Dorsolateral prefrontal cortex (tissue), 120 donors: ENCODE measurements at regions of chr1 and their contacts with region 1.

Region 1: GRCh38 chr1:201625226-201625761 is 86.4 kb downstream of the NAV1 start:
- DNase-seq: no peak
- H3K4me3 ChIP-seq: no peak overlapping the region
- H3K27ac ChIP-seq: no peak overlapping the region
- H3K27me3 ChIP-seq: no peaks in the 10 kb centered on the region
- CTCF ChIP-seq: no peak

Region 2: DNA sequence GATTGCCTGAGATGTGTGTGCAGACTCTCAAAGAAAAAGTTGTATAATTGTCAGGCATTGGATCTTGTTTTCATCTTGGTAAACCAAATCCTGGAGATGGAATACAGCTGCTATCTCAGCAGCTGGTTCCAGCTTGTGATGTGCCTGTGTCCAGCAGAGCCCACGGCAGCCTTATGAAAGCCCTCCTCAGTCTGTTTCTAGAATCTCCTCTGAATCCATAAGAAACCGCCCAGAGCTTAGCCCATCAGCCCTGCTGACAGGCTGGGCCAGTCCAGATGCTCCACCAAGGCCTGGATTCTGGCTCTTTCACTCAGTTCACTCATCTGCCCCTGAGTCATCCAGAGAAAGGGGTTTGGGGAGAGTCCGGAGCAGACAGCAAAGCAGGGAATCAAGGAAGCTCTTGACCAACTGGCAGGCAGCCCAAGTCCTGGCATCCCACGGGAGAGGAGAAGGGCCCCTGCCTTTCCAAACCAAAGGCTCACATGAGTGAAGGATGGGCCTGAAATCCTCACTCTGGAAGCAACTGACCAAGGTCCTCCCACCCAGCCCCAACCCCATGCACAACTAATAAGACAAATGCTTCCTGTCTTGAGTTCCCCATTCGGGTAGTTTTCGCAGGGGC is 40.7 kb before region 1 on chr1:
- intact Hi-C with region 1: loop called in 1 of 2 experiments (anchors 5 kb)
- DNase-seq: peak in 3 of 10 donors; percentile 24 to 48 (median 38)
- H3K4me3 ChIP-seq: no peak overlapping the region
- H3K27ac ChIP-seq: peak overlapping the region in 51 of 59 donors; percentile 3 to 80 (median 62)
- H3K27me3 ChIP-seq: no peaks in the 10 kb centered on the region
- CTCF ChIP-seq: no peak